PC-3 (cell line): ENCODE measurements at regions of chr9 and their contacts with region 1.

Region 1: GRCh38 chr9:97710356-97711222 is 13.4 kb upstream of the XPA start:
- DNase-seq: peak; percentile 70
- ATAC-seq: peak; percentile 58
- H3K4me3 ChIP-seq: no peak overlapping the region
- H3K27ac ChIP-seq: no peak overlapping the region
- H3K4me1 ChIP-seq: peaks cover 32% of the 10 kb centered on the region
- H3K27me3 ChIP-seq: no peaks in the 10 kb centered on the region
- CTCF ChIP-seq: peak; percentile 81

Region 2: DNA sequence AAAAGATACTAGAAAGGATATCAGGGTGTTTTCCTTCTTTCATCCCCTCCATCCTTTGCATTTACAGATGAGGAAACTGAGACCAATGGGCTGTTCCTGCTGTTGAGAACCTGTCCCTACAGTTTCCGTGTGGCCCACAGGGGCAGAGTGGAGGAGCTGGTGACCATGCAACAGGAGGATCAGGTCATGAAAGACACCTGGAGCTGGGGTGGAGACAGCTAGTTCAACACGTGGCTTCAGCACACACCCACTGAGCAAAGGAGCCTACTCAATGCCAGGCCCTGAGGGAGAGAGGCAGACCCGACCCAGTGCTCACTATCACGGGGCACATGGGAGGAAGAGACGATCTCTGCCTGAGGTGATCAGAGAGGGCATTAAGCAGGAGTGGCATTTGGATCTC is 17.7 kb after region 1 on chr9:
- CTCF ChIA-PET with region 1: no interaction called
- POLR2A ChIA-PET with region 1: no interaction called
- intact Hi-C with region 1: no loop called
- DNase-seq: no peak
- ATAC-seq: no peak
- H3K4me3 ChIP-seq: no peak overlapping the region
- H3K27ac ChIP-seq: no peak overlapping the region
- H3K4me1 ChIP-seq: no peaks in the 10 kb centered on the region
- H3K27me3 ChIP-seq: no peaks in the 10 kb centered on the region
- CTCF ChIP-seq: no peak

Region 3: GRCh38 chr9:97803167-97804058 is 92.8 kb after region 1 on chr9:
- CTCF ChIA-PET with region 1: no interaction called
- POLR2A ChIA-PET with region 1: no interaction called
- intact Hi-C with region 1: loop called (anchors 5 kb)
- DNase-seq: peak; percentile 76
- ATAC-seq: peak; percentile 76
- H3K4me3 ChIP-seq: peak overlapping the region; percentile 70
- H3K27ac ChIP-seq: peak overlapping the region; percentile 47
- H3K4me1 ChIP-seq: peaks cover 20% of the 10 kb centered on the region
- H3K27me3 ChIP-seq: no peaks in the 10 kb centered on the region
- CTCF ChIP-seq: no peak

Region 4: GRCh38 chr9:97863314-97863713 is 152.7 kb after region 1 on chr9:
- CTCF ChIA-PET with region 1: no interaction called
- POLR2A ChIA-PET with region 1: no interaction called
- intact Hi-C with region 1: no loop called
- DNase-seq: no peak
- ATAC-seq: no peak
- H3K4me3 ChIP-seq: no peak overlapping the region
- H3K27ac ChIP-seq: no peak overlapping the region
- H3K4me1 ChIP-seq: no peaks in the 10 kb centered on the region
- H3K27me3 ChIP-seq: no peaks in the 10 kb centered on the region
- CTCF ChIP-seq: no peak

Region 5: GRCh38 chr9:97873877-97874276 is 163.3 kb after region 1 on chr9:
- CTCF ChIA-PET with region 1: no interaction called
- POLR2A ChIA-PET with region 1: no interaction called
- intact Hi-C with region 1: loop called (anchors 1 kb)
- DNase-seq: peak; percentile 73
- ATAC-seq: peak; percentile 48
- H3K4me3 ChIP-seq: no peak overlapping the region
- H3K27ac ChIP-seq: 0 out of 2 replicates have a peak overlapping the region, but pooled peaks have one; percentile 23
- H3K4me1 ChIP-seq: peaks cover 36% of the 10 kb centered on the region
- H3K27me3 ChIP-seq: no peaks in the 10 kb centered on the region
- CTCF ChIP-seq: no peak

Region 6: DNA sequence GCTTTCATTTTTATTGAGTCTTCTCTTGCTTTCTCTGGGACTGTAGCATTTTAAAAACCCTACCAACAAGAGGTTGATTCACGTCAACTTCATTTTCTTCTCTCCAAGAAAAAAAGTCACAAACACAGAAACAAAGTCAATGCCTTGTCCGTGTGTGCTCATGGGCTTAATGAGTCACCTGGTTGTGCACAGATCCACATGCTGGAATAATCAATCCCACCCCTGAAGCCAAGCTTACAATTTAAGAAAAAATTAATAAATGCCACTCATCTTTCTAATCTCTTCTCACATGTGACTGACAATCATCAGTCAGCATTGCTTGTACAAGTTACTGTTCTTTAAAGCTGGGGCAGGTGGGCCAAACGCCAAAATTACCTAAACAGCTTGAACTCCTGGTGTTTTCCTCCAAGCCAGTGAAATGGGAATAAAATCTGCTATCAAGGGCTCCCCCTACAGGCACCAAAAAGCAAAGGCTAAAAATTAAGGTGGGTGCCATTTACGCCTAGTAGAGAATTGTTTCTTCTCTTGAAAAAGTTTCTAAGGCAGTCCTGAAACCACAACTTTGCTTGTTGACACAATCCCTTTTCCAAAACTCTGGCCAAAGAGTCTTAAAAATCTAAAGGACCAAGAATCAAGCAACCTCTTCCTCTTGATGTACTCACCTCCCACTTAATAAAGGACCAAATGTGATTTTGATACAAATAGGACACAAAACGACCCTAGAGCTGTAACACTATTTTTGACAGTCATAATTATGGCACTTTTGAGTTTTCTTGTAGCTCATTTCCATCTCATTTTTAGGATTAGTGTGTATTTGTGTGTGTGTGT is 190.4 kb after region 1 on chr9:
- CTCF ChIA-PET with region 1: no interaction called
- POLR2A ChIA-PET with region 1: no interaction called
- intact Hi-C with region 1: loop called (anchors 1 kb)
- DNase-seq: peak; percentile 59
- ATAC-seq: peak; percentile 37
- H3K4me3 ChIP-seq: no peak overlapping the region
- H3K27ac ChIP-seq: no peak overlapping the region
- H3K4me1 ChIP-seq: peaks cover 7% of the 10 kb centered on the region
- H3K27me3 ChIP-seq: no peaks in the 10 kb centered on the region
- CTCF ChIP-seq: peak; percentile 81